ENCODE measurements at regions of chrX and their contacts with region 1.

Region 1: GRCh38 chrX:37745354-37745753 is 34.5 kb upstream of the CYBB start:
- DNase-seq: peak; percentile 54 to 56
- H3K4me3 ChIP-seq: no peak overlapping the region
- H3K27ac ChIP-seq: no peak overlapping the region
- H3K4me1 ChIP-seq: no peaks in the 10 kb centered on the region
- H3K27me3 ChIP-seq: no peaks in the 10 kb centered on the region
- CTCF ChIP-seq: peak; percentile 80

Region 2: DNA sequence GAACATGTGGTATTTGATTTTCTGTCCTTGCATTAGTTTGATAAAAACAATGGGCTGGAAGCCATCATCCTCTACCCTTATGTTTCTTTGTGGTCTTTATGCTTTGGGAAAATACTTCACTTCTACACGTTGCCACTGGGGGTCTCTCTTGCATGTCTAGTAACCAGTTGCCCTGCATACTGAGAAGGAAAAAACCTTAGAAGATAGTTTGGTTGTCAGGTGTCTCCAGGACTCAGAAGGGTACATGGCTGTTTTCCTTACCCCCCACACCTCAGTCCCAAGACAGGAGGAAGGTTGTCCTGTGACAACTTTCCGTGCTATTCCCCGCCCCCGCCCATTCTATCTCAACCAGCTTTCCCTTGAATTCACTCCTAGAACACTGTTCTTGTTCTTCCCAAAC is 236.0 kb before region 1 on chrX:
- CTCF ChIA-PET with region 1: no interaction called
- POLR2A ChIA-PET with region 1: no interaction called
- intact Hi-C with region 1: loop called (anchors 5 kb)
- DNase-seq: no peak
- H3K4me3 ChIP-seq: no peak overlapping the region
- H3K27ac ChIP-seq: no peak overlapping the region
- H3K4me1 ChIP-seq: no peaks in the 10 kb centered on the region
- H3K27me3 ChIP-seq: no peaks in the 10 kb centered on the region
- CTCF ChIP-seq: peak; percentile 58

Region 3: DNA sequence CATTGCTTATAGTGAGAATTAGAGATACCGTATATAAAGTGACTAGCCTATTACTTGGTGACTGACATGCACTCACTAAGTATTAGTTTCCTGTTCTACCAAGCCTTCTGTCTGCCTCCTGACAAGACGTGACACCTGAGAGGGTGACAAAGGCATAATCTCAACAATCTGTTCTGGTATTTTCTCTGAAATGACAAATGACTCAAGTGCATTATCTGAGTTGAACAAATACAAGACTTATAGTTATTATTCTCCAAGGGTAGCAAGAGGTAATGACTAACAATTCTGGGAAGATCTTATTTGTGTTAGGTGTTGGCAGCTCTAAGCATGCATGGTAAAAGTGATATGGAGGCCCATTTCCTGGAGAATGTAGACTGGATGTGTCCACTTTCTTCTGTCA is 321.6 kb after region 1 on chrX:
- CTCF ChIA-PET with region 1: no interaction called
- POLR2A ChIA-PET with region 1: no interaction called
- intact Hi-C with region 1: no loop called
- DNase-seq: no peak
- H3K4me3 ChIP-seq: no peak overlapping the region
- H3K27ac ChIP-seq: no peak overlapping the region
- H3K4me1 ChIP-seq: no peaks in the 10 kb centered on the region
- H3K27me3 ChIP-seq: no peaks in the 10 kb centered on the region
- CTCF ChIP-seq: no peak